GM18951 (cell line): ENCODE measurements at regions of chr1 and their contacts with region 1.

Region 1: GRCh38 chr1:196160066-196160795 is 448.0 kb downstream of the KCNT2 start:
- POLR2A ChIP-seq: no peak

Region 2: GRCh38 chr1:196660852-196661251 is 500.6 kb after region 1 on chr1:
- in situ Hi-C with region 1: loop called (anchors 25 kb)
- POLR2A ChIP-seq: no peak